GM12878 (cell line): ENCODE measurements at regions of chr6 and their contacts with region 1.

Region 1: GRCh38 chr6:106637717-106638341 is 8.5 kb downstream of the QRSL1 start:
- DNase-seq: no peak
- ATAC-seq: peak; percentile 87
- H3K4me3 ChIP-seq: peak overlapping the region; percentile 54
- H3K27ac ChIP-seq: peak overlapping the region; percentile 87
- H3K4me1 ChIP-seq: peaks cover 49% of the 10 kb centered on the region
- H3K27me3 ChIP-seq: no peaks in the 10 kb centered on the region
- CTCF ChIP-seq: no peak
- EP300 ChIP-seq: peak; percentile 33 to 73; a peak in 2 of 4 replicates
- POLR2A ChIP-seq: no peak
- RAD21 ChIP-seq: no peak

Region 2: DNA sequence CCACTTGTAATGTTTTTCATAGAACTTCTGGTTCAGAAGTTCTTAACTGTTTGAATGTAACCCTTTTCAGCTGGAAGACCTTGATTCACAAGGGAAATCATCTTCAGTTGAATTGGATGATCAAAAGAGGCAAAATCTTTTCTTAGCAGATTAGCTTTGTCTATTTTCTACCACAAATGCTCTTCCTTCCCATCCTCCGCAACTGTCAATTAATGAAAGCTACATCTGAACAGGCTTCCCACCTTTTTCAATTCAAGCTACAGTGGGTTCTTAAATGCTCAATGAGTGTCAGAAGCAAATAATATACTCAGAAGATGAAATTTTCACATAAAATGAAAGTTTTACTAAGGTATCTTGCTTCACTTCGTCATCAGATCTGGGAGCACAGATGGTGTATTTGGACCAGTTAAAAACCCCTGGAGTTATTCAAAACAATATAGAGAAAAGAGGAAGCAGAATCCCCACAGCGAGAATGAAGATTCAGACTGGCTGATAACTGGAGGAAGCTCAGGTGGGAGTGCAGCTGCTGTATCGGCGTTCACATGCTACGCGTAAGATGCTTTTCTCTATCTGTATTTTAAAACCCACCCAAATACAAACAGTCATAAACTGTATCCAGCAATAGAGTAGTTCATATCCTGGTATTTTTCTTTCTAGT is 11.0 kb after region 1 on chr6:
- CTCF ChIA-PET with region 1: interaction called, 6 read pairs
- POLR2A ChIA-PET with region 1: interaction called, 4 read pairs
- RAD21 ChIA-PET with region 1: interaction called, 3 read pairs
- SMC1A ChIA-PET with region 1: interaction called, 25 read pairs
- in situ Hi-C with region 1: no loop called
- intact Hi-C with region 1: no loop called
- DNase-seq: no peak
- ATAC-seq: peak; percentile 88
- H3K4me3 ChIP-seq: peak overlapping the region; percentile 46
- H3K27ac ChIP-seq: peak overlapping the region; percentile 73
- H3K4me1 ChIP-seq: peaks cover 12% of the 10 kb centered on the region; the same call in 1 of the 2 replicates
- H3K27me3 ChIP-seq: no peaks in the 10 kb centered on the region
- CTCF ChIP-seq: no peak
- EP300 ChIP-seq: no peak
- POLR2A ChIP-seq: no peak
- RAD21 ChIP-seq: no peak

Region 3: GRCh38 chr6:106702451-106703110 is 64.8 kb after region 1 on chr6:
- CTCF ChIA-PET with region 1: no interaction called
- POLR2A ChIA-PET with region 1: interaction called, 5 read pairs
- RAD21 ChIA-PET with region 1: no interaction called
- SMC1A ChIA-PET with region 1: interaction called, 3 read pairs
- in situ Hi-C with region 1: no loop called
- intact Hi-C with region 1: loop called (anchors 5 kb)
- DNase-seq: peak; percentile 86
- ATAC-seq: peak; percentile 99
- H3K4me3 ChIP-seq: peak overlapping the region; percentile 23; the same call in 1 of the 2 replicates
- H3K27ac ChIP-seq: peak overlapping the region; percentile 93
- H3K4me1 ChIP-seq: peaks cover 17% of the 10 kb centered on the region
- H3K27me3 ChIP-seq: no peaks in the 10 kb centered on the region
- CTCF ChIP-seq: no peak
- EP300 ChIP-seq: peak in 1 of 2 experiments; percentile 77; a peak in 2 of 4 replicates
- POLR2A ChIP-seq: no peak
- RAD21 ChIP-seq: peak; percentile 9; the same call in 1 of the 2 replicates